MCF 10A (cell line): ENCODE measurements at regions of chr13 and their contacts with region 1.

Region 1: GRCh38 chr13:111187960-111188541 is 72.9 kb downstream of the ARHGEF7 start:
- DNase-seq: peak; percentile 63
- H3K4me3 Mint-ChIP-seq: no peak overlapping the region
- H3K27ac Mint-ChIP-seq: peak overlapping the region; percentile 67
- H3K4me1 Mint-ChIP-seq: peaks cover 18% of the 10 kb centered on the region
- H3K27me3 Mint-ChIP-seq: no peaks in the 10 kb centered on the region
- CTCF ChIP-seq: no peak

Region 2: DNA sequence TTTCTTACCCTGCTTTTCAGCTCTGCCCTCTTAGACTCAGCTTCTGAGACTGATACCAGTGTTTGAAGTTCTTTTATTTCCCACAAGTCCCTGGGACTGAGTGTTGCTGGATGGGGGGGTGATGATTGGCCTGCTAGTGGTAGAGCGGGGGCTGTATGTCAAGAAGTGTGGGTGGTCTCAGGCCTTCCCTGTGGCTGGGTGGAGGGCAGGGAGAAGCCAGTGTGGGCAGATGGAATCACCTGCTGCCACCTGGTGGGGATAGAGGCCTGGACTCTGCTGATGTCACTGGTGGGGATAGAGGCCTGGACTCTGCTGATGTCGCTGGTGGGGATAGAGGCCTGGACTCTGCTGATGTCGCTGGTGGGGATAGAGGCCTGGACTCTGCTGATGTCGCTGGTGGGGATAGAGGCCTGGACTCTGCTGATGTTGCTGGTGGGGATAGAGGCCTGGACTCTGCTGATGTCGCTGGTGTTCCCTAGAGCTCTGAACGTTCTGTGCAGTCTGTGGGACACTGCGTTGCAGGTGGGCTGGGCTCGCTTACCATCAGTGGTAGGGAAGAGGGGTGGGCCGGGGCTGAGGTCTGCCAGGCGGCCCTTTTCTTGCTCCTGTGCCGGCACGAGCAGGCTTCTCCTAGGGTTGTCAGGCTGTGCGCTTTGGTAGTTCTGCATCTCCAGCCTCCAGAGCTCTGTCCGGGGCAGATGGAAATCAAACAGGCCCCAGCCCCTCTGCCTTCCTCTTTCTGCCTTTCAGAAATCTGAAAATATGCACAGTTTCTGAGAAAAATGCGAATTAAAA is 28.3 kb after region 1 on chr13:
- CTCF ChIA-PET with region 1: interaction called, 5 read pairs
- POLR2A ChIA-PET with region 1: no interaction called
- intact Hi-C with region 1: loop called (anchors 2 kb)
- DNase-seq: peak; percentile 30
- H3K4me3 Mint-ChIP-seq: no peak overlapping the region
- H3K27ac Mint-ChIP-seq: no peak overlapping the region
- H3K4me1 Mint-ChIP-seq: peaks cover 12% of the 10 kb centered on the region
- H3K27me3 Mint-ChIP-seq: no peaks in the 10 kb centered on the region
- CTCF ChIP-seq: peak; percentile 39